ENCODE measurements at regions of chr2 and their contacts with region 1.

Region 1: DNA sequence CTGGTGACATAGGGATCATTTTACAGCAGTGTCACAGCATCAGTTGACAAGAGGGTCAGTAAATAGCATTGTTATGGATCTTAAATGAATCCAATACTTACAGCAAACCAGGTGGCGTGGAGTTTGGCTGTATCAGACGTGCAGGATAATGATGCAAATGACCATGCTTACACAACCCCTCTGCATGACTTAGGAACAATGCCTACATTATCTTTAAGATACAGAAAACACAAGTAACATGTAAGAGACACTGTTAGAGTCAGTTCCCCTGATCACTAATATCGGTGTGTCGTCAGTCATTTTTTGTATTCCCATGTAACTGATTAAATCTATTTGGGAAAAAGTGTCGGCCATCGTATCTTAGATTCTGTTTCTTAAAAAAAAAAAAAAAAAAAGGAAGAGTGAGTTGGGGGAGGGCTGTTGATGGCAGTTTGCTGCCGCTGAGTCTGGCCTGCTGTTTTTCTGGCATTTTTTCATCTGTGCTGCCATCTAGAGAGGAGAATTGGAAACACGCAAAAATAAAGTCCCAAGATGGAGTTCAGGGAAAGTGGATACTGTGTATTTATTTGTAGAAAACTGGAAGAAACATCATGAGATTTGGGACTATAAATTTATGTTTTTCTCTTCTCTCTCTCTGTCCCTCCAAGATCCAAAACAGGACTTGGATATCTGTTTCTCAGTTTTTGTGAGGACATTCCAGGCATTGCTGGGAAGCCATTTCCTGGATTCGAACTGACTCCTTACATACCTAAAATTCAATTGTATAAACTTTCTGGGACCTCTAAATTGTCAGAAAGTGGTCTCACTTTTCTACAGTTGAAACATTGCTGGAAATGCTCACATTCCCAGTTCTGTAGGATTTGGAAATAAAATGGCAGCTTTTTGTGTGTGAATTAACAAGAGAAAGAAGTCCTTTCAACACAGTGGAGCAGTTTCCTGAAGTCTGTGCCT is 60.3 kb upstream of the AGPS start:
- DNase-seq: peak; percentile 58
- H3K4me3 Mint-ChIP-seq: no peak overlapping the region
- H3K27ac Mint-ChIP-seq: no peak overlapping the region
- H3K4me1 Mint-ChIP-seq: peaks cover 16% of the 10 kb centered on the region
- H3K27me3 Mint-ChIP-seq: no peaks in the 10 kb centered on the region

Region 2: DNA sequence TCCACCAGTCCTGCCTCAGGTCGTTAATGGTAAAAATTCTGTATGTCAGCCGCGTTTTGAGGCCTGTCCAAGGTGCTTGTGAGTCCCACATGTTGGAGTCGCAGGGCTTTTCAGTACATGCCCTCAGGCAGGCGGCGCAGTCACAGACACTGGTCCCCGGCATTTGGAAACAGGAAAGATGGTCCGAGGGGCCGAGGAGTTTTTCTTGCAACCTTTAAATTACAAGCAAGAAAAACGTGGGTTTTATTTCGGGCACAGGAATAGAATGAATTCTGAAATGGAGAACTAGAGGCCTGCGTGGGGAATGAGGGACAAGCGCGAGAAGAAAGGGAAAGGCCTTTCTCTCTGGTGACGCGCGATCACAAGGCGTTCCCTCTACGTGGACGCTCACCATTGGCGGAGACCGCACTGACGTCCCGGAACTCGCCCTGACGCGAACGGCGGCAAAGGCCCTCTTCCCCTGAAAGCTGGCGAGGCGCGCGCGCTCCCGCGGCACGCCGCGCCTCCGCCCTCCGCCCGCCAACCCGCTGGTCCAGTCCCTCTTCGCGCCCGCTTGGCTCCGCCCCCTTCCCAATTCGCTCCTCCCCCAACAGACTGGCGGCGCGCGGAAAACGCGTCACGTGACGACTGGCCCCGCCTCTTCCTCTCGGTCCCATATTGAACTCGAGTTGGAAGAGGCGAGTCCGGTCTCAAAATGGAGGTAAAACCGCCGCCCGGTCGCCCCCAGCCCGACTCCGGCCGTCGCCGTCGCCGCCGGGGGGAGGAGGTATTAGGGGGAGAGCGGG is 120.0 kb before region 1 on chr2 and contains the start of gene HNRNPA3:
- CTCF ChIA-PET with region 1: interaction called, 3 read pairs
- intact Hi-C with region 1: loop called (anchors 1 kb)
- DNase-seq: peak; percentile 99
- H3K4me3 Mint-ChIP-seq: peak within 1 kb of the TSS; percentile 97
- H3K27ac Mint-ChIP-seq: peak within 1 kb of the TSS; percentile 100
- H3K4me1 Mint-ChIP-seq: peaks cover 43% of the 10 kb centered on the region
- H3K27me3 Mint-ChIP-seq: no peaks in the 10 kb centered on the region
- total RNA-seq, gene HNRNPA3: 312 to 340 TPM

Region 3: GRCh38 chr2:177342736-177343135 is 10.4 kb after region 1 on chr2:
- CTCF ChIA-PET with region 1: interaction called, 11 read pairs
- intact Hi-C with region 1: no loop called
- DNase-seq: no peak
- H3K4me3 Mint-ChIP-seq: no peak overlapping the region
- H3K27ac Mint-ChIP-seq: no peak overlapping the region
- H3K4me1 Mint-ChIP-seq: no peaks in the 10 kb centered on the region
- H3K27me3 Mint-ChIP-seq: no peaks in the 10 kb centered on the region

Region 4: DNA sequence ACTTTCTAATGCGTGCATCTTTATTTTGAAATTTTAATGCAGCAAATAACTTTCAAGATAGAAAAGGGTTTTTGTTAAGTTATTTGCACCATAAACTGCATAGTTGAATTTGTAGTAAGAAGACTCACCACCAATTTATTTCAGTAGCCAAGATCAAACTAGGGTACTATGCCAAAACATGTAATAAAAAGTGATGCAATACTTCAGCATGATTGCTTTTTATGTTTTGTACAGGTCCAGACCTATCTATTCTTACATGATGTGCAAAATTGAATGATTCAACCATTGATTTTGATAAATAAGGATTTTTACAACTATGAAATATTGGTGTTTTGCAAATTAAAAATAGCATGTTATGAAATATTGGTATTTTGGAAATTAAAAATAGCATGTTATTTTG is 87.0 kb after region 1 on chr2:
- CTCF ChIA-PET with region 1: interaction called, 123 read pairs
- intact Hi-C with region 1: loop called (anchors 1 kb)
- DNase-seq: no peak
- H3K4me3 Mint-ChIP-seq: no peak overlapping the region
- H3K27ac Mint-ChIP-seq: peak overlapping the region; percentile 63
- H3K4me1 Mint-ChIP-seq: peaks cover 37% of the 10 kb centered on the region
- H3K27me3 Mint-ChIP-seq: no peaks in the 10 kb centered on the region

Region 5: GRCh38 chr2:177618255-177619253 is 286.2 kb after region 1 on chr2:
- CTCF ChIA-PET with region 1: no interaction called
- intact Hi-C with region 1: loop called (anchors 5 kb)
- DNase-seq: peak; percentile 95
- H3K4me3 Mint-ChIP-seq: peak overlapping the region; percentile 93
- H3K27ac Mint-ChIP-seq: peak overlapping the region; percentile 96
- H3K4me1 Mint-ChIP-seq: peaks cover 3% of the 10 kb centered on the region
- H3K27me3 Mint-ChIP-seq: no peaks in the 10 kb centered on the region